B cell (primary cell): ENCODE measurements at regions of chr1 and their contacts with region 1.

Region 1: GRCh38 chr1:25895365-25895993 is 10.7 kb downstream of the STMN1 start:
- DNase-seq: peak; percentile 94
- ATAC-seq: peak; percentile 100
- H3K4me3 ChIP-seq: no peak overlapping the region
- H3K4me3 Mint-ChIP-seq: no peak overlapping the region
- H3K27ac ChIP-seq: no peak overlapping the region
- H3K27ac Mint-ChIP-seq: peak overlapping the region; percentile 27
- H3K4me1 ChIP-seq: peaks cover 0 to 12% of the 10 kb centered on the region in 2 donors
- H3K4me1 Mint-ChIP-seq: peaks cover 9% of the 10 kb centered on the region
- H3K27me3 ChIP-seq: no peaks in the 10 kb centered on the region
- H3K27me3 Mint-ChIP-seq: no peaks in the 10 kb centered on the region
- CTCF ChIP-seq: peak; percentile 99

Region 2: DNA sequence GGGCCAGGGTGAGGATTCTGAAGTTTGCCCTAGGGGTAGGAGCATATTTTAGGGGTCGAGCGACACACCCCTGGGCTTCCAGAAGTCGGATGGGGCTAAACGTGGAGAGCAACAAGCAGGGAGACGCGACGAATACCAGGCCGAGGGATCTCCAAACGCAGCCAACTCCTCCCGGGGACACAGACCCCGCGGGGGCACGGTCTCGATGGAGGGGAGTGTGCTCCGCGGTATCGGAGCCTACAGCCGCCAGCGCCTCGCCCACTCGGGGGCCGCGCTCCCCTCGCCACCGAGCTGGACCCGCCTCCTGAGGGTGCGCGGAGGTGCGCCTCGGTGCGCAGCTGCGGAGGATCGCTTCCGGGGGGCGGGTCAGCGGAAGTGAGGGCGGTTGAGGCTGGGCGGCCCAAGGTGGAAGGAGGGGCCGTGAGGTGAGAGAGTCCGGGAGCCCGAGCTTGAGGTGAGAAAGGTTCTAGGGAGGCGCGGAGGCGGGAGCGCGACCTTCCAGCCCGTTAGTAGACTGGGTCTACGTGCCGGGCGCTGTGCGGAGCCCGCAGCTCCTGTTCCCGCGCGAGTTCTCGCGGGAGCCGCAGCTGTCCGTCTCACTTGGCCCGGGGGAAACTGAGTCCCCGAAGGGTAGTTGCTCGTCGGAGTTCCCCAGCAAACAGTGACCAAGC is 75.8 kb before region 1 on chr1 and contains the start of gene MTFR1L:
- CTCF ChIA-PET with region 1: interaction called, 5 read pairs
- POLR2A ChIA-PET with region 1: no interaction called
- intact Hi-C with region 1: loop called (anchors 1 kb)
- DNase-seq: peak; percentile 94
- ATAC-seq: peak; percentile 93
- H3K4me3 ChIP-seq: peak within 1 kb of the TSS; percentile 66 to 99 (median 84)
- H3K4me3 Mint-ChIP-seq: peak within 1 kb of the TSS; percentile 95
- H3K27ac ChIP-seq: peak within 1 kb of the TSS; percentile 76 to 84
- H3K27ac Mint-ChIP-seq: peak within 1 kb of the TSS; percentile 94
- H3K4me1 ChIP-seq: peaks cover 18 to 24% of the 10 kb centered on the region in 2 donors
- H3K4me1 Mint-ChIP-seq: peaks cover 29% of the 10 kb centered on the region
- H3K27me3 ChIP-seq: no peaks in the 10 kb centered on the region
- H3K27me3 Mint-ChIP-seq: no peaks in the 10 kb centered on the region
- CTCF ChIP-seq: no peak
- total RNA-seq, gene MTFR1L: 40.9 and 41.5 TPM in 2 replicates

Region 3: DNA sequence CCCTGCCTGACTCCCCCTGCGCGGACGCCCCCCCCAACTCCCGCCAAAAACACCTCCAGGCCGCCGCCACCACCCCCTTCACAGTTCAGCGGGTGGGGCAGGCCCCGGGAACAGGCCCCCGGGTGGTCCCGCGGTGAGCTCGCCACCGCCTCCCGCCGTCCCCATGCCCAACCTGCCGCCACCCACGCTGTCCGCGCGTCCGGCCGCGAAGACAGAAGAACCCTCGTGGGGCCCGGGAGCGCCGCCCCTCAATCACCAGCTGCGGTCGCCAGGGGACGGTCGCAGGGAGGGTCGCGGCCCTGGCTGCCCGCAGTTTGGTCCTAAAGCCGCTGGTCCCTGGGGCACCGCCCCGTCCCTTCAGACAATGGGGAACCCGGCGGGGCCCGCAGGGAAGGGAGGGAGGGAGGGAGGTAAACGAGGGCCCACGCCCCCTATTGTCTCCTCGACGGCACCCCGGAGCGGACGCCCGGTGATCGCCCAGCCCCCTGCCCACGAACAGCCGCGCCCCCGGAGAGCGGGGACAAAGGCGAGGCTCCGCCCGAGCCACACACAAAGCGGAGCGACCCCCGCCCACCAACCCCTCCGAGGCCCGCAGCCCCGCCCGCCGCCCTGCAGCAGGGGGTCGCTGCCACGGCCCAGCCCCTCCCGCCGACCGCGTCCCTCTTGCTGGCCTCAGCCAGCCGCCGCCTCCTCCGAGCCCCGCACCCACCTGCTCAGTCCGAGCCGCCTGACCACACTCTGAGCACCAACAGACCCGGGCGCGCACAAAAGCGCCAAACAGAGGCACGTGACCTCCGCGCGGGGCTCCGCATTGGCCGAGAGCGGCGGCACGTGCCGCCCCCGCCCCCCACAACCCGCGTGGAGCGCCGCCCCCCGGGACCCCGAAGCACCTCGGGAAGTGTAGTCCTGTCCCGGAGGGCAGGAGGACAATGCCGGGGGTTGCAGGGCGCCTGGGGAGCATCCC is 10.5 kb after region 1 on chr1 and contains the start of gene STMN1:
- CTCF ChIA-PET with region 1: interaction called, 41 read pairs
- POLR2A ChIA-PET with region 1: interaction called, 5 read pairs
- intact Hi-C with region 1: loop called (anchors 1 kb)
- DNase-seq: peak; percentile 93
- ATAC-seq: peak; percentile 75
- H3K4me3 ChIP-seq: peak within 1 kb of the TSS; percentile 62 to 99 (median 63)
- H3K4me3 Mint-ChIP-seq: peak within 1 kb of the TSS; percentile 88
- H3K27ac ChIP-seq: peak within 1 kb of the TSS; percentile 62 to 65
- H3K27ac Mint-ChIP-seq: peak within 1 kb of the TSS; percentile 94
- H3K4me1 ChIP-seq: peaks cover 6 to 22% of the 10 kb centered on the region in 2 donors
- H3K4me1 Mint-ChIP-seq: peaks cover 14% of the 10 kb centered on the region
- H3K27me3 ChIP-seq: no peaks in the 10 kb centered on the region
- H3K27me3 Mint-ChIP-seq: no peaks in the 10 kb centered on the region
- CTCF ChIP-seq: no peak
- total RNA-seq, gene STMN1: 42.2 and 48.0 TPM in 2 replicates

Region 4: GRCh38 chr1:25989440-25990234 is 94.2 kb after region 1 on chr1:
- CTCF ChIA-PET with region 1: interaction called, 210 read pairs
- POLR2A ChIA-PET with region 1: no interaction called
- intact Hi-C with region 1: no loop called
- DNase-seq: no peak
- ATAC-seq: no peak
- H3K4me3 ChIP-seq: no peak overlapping the region
- H3K4me3 Mint-ChIP-seq: no peak overlapping the region
- H3K27ac ChIP-seq: no peak overlapping the region
- H3K27ac Mint-ChIP-seq: no peak overlapping the region
- H3K4me1 ChIP-seq: peaks cover 8 to 11% of the 10 kb centered on the region in 2 donors
- H3K4me1 Mint-ChIP-seq: peaks cover 11% of the 10 kb centered on the region
- H3K27me3 ChIP-seq: no peaks in the 10 kb centered on the region
- H3K27me3 Mint-ChIP-seq: no peaks in the 10 kb centered on the region
- CTCF ChIP-seq: no peak

Region 5: DNA sequence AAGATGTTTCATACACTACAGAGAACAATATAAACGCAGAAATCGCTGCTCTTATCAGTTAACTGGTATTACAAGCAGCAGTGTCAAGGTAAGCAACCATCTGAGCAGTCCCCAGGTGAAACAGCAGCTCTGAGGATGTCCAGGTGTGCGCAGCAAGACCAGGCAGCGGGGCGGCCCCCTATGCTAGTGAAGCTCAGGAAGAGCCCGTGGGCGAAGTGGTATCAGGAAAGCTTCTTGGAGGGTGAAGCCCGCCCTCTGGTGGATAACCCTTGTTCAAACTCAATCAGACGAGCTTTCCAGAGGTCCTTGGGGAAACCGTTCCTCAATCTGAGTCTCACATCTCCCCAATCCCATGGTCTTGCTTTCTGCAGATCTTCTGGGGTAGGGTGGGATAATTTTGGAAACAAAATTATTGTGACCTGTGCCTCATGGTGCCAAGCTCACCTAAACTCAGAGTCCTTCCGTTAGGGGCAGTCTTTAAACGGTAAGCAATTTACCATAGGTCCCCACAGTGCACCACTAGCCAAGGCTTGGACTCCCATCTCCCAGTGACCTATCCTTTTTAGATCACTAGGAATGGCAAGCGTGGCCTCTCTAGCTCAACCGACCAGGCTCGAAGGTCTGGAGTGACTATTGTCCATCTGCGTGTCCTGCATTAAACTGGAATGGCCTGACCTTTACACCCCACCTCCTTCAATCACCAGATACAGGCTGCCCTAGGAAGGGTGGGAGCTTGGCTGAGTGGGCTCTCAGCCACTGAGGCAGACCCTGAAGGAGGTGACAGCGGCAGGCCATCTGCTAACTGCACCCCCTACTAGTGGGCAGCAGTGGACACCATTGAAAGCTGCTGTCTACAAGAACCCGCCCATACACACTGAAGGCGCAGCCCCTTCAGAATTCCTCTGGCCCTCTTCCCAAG is 249.8 kb after region 1 on chr1:
- CTCF ChIA-PET with region 1: interaction called, 20 read pairs
- POLR2A ChIA-PET with region 1: no interaction called
- intact Hi-C with region 1: loop called (anchors 10 kb)
- DNase-seq: peak; percentile 79
- ATAC-seq: peak; percentile 65
- H3K4me3 ChIP-seq: no peak overlapping the region
- H3K4me3 Mint-ChIP-seq: no peak overlapping the region
- H3K27ac ChIP-seq: no peak overlapping the region
- H3K27ac Mint-ChIP-seq: no peak overlapping the region
- H3K4me1 ChIP-seq: peaks cover 4 to 6% of the 10 kb centered on the region in 2 donors
- H3K4me1 Mint-ChIP-seq: peaks cover 3% of the 10 kb centered on the region
- H3K27me3 ChIP-seq: peaks cover 0 to 6% (median 0%) of the 10 kb centered on the region in 4 experiments
- H3K27me3 Mint-ChIP-seq: peaks cover 14% of the 10 kb centered on the region
- CTCF ChIP-seq: peak; percentile 90